Ovary (tissue), 10 donors: ENCODE measurements at regions of chr7 and their contacts with region 1.

Region 1: GRCh38 chr7:29189743-29190201 is 4.8 kb upstream of the CHN2 start:
- DNase-seq: peak; percentile 59 to 77 (median 68)
- H3K4me3 ChIP-seq: no peak overlapping the region
- H3K27ac ChIP-seq: no peak overlapping the region
- H3K4me1 ChIP-seq: peaks cover 3% of the 10 kb centered on the region
- H3K27me3 ChIP-seq: no peaks in the 10 kb centered on the region
- CTCF ChIP-seq: peak; percentile 63 to 66 (median 64)
- EP300 ChIP-seq: no peak
- POLR2A ChIP-seq: no peak

Region 2: DNA sequence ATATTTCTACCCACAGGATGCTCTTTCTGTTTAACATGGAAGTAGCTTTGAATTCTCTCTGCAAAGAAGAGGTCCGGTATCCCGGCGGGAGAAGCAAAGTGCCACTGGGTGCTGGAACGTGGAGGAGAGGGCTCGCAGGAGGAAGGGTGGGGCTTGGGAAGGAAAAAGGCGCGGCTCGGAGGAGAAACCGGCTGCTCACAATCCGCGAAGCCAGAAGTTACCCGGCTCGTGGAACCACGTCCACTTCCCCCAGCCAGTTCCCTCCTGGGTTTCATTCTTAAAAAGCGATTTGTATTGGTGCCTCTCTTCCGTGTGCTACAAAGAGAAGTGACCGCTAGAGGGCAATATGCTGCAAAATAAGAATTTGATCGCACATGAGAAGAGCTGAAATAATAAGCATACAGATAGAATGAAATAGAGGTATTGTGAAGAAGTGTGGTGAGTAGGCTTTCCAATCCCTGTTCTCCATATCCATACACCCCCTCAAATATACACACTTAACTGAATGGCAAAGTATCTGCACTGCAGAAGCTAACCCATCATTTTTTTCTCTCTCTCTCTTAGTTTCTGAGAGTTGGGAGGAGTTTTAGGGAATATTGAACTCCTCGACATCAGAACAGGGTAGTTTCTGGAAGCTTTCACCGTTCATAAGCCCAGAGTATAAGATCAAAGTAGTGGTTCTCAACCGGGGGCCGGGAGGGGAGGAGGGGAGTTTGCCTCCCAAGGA is 262.7 kb before region 1 on chr7:
- intact Hi-C with region 1: loop called in 1 of 4 experiments (anchors 10 kb)
- DNase-seq: peak; percentile 54 to 73 (median 67)
- H3K4me3 ChIP-seq: peak overlapping the region; percentile 59
- H3K27ac ChIP-seq: no peak overlapping the region
- H3K4me1 ChIP-seq: no peaks in the 10 kb centered on the region
- H3K27me3 ChIP-seq: no peaks in the 10 kb centered on the region
- CTCF ChIP-seq: peak; percentile 37 to 75 (median 64)
- EP300 ChIP-seq: no peak
- POLR2A ChIP-seq: no peak

Region 3: GRCh38 chr7:29318853-29319718 is 129.3 kb after region 1 on chr7:
- intact Hi-C with region 1: no loop called
- DNase-seq: no peak
- H3K4me3 ChIP-seq: no peak overlapping the region
- H3K27ac ChIP-seq: no peak overlapping the region
- H3K4me1 ChIP-seq: no peaks in the 10 kb centered on the region
- H3K27me3 ChIP-seq: no peaks in the 10 kb centered on the region
- CTCF ChIP-seq: no peak
- EP300 ChIP-seq: no peak
- POLR2A ChIP-seq: no peak

Region 4: DNA sequence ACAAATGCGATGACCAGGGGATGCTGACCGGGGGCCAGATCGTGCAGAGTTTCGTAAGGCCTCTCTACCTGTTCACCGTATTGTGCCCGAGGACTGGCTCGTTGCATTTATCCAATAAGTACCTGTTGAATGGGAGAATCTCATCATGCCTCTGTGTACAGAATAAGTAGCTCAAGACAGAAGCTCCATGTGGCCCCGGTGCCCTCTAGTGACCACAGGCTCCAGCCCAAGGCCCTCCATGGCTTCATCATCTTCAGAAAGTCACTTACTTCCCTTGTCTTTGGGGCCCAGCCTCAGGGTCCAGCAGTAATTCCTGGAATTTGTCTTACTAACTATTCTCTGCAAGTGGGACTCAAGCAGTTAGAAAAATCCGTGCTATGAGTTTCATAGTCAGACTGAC is 155.8 kb after region 1 on chr7:
- intact Hi-C with region 1: loop called in 1 of 4 experiments (anchors 10 kb)
- DNase-seq: peak in 2 of 5 donors; percentile 28 to 38
- H3K4me3 ChIP-seq: no peak overlapping the region
- H3K27ac ChIP-seq: no peak overlapping the region
- H3K4me1 ChIP-seq: peaks cover 2% of the 10 kb centered on the region
- H3K27me3 ChIP-seq: no peaks in the 10 kb centered on the region
- CTCF ChIP-seq: no peak
- EP300 ChIP-seq: no peak
- POLR2A ChIP-seq: no peak

Region 5: DNA sequence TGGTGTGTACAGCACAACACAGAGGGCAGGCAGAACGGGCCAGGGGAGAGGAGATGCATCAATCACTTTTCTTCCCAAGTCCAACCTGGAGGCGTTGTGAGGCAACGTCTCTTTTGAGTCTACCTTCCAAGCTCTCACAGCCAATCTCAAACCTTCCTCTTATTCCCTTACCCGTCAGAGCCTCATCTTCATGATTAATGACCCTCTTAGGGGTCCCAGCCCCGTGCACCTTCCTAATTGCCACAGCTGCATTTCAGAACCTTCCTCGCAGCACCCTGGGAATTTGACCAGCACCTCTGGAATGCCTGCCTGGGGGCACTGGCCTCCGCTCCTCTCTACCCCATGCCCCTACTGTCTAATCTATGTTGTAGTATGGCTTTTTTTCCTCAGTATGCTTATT is 204.5 kb after region 1 on chr7:
- intact Hi-C with region 1: loop called in 1 of 4 experiments (anchors 5 kb)
- DNase-seq: no peak
- H3K4me3 ChIP-seq: no peak overlapping the region
- H3K27ac ChIP-seq: no peak overlapping the region
- H3K4me1 ChIP-seq: no peaks in the 10 kb centered on the region
- H3K27me3 ChIP-seq: no peaks in the 10 kb centered on the region
- CTCF ChIP-seq: no peak
- EP300 ChIP-seq: no peak
- POLR2A ChIP-seq: no peak